Astrocyte of the cerebellum (primary cell): ENCODE measurements at regions of chr9 and their contacts with region 1.

Region 1: DNA sequence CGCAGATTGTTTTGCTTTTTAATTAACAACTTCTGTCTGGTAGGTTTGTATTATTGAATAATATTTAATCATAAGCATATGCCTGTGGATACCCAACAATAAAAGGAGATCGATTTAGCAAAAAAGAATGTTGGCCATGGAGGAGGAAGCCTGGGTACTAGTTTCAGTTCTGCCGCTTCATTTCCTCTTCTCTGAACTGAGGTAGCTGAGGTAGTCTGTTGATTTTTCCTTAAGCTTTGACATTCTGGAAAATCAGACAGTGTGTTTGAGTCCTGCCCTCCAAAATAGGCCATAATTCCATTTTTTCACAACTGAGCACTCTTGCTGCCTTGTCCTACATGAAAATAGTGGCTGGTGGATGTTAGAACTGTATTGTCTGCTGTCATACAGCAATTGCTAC is 6.0 kb upstream of the GPR21 start:
- DNase-seq: no peak
- H3K4me3 ChIP-seq: no peak overlapping the region
- CTCF ChIP-seq: no peak

Region 2: DNA sequence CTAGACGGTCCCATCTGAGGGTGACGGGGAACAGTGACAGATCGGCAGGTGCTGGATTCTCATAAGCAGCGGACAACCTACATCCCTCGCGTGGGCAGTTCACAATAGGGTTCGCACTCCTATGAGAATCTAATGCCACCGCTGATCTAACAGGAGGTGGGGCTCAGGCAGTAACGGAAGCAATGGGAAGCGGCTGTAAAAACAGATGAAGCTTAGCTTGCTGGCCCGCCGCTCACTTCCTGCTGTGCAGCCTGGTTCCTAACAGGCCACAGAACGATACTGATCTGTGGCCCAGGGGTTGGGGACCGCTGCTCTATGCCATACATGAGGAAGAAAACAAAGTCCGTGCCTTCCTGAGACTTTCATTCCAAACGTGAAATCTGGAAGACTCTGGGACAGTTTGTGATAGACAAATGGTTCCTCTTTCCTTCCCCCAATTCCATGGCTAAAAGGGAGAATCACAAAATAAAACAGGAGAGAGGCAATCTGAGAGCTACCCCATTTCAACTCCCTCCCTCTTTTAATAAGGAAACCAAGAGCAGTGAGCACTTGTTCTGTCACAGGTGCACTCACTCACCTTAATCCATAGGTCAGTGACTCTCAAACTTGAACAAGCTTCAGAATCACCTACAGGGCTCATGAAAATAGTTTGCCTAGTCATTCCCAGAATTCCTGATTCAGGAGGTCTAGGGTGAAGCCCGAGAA is 211.2 kb before region 1 on chr9:
- in situ Hi-C with region 1: no loop called
- DNase-seq: no peak
- H3K4me3 ChIP-seq: no peak overlapping the region
- CTCF ChIP-seq: no peak

Region 3: DNA sequence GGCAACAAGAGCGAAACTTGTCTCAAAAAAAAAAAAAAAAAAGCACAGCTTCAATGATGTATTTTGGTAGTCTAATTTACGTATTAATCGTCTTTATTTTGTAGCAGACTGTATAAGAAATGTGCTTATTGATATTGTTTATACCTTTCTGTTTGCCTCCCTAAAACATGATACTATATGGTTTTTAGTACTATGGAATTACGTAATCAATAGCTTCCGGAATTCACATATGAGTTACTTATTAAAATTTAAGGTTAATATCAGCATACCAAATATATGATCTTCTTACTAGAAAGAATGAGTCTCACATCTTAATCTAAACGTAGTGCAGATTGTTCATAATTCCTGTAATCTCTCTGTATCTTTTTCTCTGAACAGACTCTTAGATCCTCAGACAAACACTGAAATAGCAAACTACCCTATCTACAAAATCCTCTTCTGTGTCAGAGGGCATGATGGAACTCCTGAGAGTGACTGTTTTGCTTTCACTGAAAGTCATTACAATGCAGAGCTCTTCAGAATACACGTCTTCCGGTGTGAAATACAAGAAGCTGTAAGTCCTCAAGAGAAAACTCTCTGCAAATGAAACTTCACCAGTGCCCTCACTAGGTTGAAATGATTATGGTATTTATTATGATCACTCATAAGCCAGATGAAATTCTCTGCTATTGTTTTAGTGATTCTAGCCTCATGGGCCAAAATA is 38.4 kb before region 1 on chr9:
- in situ Hi-C with region 1: loop called (anchors 5 kb)
- DNase-seq: no peak
- H3K4me3 ChIP-seq: no peak overlapping the region
- CTCF ChIP-seq: no peak

Region 4: DNA sequence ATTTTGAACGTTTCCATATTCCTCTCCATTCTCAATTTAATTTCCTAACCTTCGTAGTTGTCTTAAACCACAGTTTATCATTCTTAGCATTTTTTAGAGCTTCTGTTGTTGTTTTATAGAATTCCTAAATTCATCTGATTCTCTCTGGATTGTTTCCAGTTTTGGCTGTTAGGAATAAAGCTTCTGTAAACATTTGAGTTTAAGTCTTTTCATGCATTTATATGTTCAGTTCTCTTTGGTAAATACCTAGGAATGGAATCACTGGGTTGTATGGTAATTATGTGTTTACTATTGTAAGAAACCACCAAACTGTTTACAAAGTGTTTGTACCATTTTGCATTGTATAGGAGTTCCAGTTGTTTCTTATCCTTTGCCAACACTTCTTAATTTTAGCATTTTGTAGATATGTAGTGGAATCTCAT is 35.7 kb after region 1 on chr9:
- in situ Hi-C with region 1: loop called (anchors 5 kb)
- DNase-seq: peak; percentile 53
- H3K4me3 ChIP-seq: no peak overlapping the region
- CTCF ChIP-seq: no peak